Sciatic nerve (tissue), 2 donors: ENCODE measurements at regions of chr19 and their contacts with region 1.

Region 1: GRCh38 chr19:33778089-33778791 is 18.4 kb upstream of the KCTD15 start:
- DNase-seq: peak; percentile 91
- ATAC-seq: peak; percentile 86

Region 2: GRCh38 chr19:33430674-33431277 is 347.5 kb before region 1 on chr19:
- intact Hi-C with region 1: loop called (anchors 10 kb)
- DNase-seq: peak; percentile 80
- ATAC-seq: peak; percentile 76

Region 3: DNA sequence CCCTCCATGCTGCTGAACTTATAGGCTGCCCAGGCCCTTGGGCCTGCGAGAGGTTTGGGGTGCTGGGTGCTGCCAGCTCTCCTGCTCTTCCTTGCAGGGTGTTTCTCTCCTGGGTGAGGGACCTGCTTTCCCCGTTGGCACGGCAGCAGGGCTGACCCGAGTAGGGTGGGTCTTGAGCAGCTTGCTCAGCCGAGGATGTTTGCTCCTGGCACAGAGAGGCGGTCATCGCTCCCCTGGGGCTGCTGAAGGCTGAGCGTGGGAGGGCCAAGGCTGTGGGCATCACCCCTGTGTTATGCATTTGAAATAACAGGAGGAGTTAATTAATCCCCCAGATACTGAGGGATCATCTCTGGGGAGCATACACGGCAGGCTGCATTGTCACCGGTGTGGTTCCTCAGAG is 23.8 kb after region 1 on chr19:
- intact Hi-C with region 1: loop called (anchors 1 kb)
- DNase-seq: no peak
- ATAC-seq: no peak

Region 4: DNA sequence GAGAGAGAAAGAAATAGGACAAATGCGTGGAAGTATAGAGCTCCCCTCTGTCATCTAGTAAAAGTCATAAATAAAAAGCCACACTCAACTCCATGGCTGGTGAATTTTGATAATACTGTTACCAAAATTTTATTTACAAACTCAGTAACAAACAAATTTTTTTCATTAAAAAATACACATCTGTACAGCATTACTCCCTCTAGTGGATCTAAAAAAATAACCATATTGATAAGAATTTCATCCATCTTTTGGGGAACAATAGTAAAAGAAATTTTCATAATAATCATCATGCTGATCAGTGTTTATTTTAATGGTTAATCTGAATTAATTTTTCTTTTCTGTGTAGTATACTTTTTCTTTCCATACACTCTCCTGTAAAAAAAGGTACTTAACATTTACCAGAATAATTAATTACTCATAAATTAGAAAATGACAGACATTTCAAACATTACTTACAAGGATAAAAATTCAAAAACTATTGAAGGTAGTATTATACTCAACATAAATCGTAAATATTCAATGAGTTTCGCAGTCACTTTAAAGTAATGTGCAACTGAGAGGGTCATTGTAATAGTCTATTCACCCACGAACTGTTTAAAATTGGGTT is 220.6 kb after region 1 on chr19:
- intact Hi-C with region 1: loop called (anchors 2 kb)
- DNase-seq: no peak
- ATAC-seq: no peak